Endothelial cell of umbilical vein (primary cell): ENCODE measurements at regions of chr6 and their contacts with region 1.

Region 1: GRCh38 chr6:29942275-29943052 is at the start of gene HLA-A:
- DNase-seq: peak; percentile 97
- H3K4me3 ChIP-seq: peak within 1 kb of the TSS; percentile 52 to 62 (median 55)
- H3K27ac ChIP-seq: peak within 1 kb of the TSS; percentile 67
- H3K4me1 ChIP-seq: no peaks in the 10 kb centered on the region
- H3K27me3 ChIP-seq: peaks cover 0 to 1% of the 10 kb centered on the region in 2 experiments
- CTCF ChIP-seq: no peak
- POLR2A ChIP-seq: peak; percentile 90
- total RNA-seq, gene HLA-A: 153 and 294 TPM in 2 replicates

Region 2: DNA sequence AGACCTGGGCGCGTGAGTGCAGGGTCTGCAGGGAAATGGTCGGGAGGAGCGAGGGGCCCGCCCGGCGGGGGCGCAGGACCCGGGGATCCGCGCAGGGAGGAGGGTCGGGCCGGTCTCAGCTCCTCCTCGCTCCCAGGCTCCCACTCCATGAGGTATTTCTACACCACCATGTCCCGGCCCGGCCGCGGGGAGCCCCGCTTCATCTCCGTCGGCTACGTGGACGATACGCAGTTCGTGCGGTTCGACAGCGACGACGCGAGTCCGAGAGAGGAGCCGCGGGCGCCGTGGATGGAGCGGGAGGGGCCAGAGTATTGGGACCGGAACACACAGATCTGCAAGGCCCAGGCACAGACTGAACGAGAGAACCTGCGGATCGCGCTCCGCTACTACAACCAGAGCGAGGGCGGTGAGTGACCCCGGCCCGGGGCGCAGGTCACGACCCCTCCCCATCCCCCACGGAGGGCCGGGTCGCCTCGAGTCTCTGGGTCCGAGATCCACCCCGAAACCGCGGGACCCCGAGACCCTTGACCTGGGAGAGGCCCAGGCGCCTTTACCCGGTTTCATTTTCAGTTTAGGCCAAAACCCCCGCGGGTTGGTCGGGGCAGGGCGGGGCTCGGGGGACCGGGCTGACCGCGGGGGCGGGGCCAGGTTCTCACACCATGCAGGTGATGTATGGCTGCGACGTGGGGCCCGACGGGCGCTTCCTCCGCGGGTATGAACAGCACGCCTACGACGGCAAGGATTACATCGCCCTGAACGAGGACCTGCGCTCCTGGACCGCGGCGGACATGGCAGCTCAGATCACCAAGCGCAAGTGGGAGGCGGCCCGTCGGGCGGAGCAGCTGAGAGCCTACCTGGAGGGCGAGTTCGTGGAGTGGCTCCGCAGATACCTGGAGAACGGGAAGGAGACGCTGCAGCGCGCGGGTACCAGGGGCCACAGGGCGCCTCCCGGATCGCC is 54.4 kb before region 1 on chr6:
- CTCF ChIA-PET with region 1: no interaction called
- POLR2A ChIA-PET with region 1: no interaction called
- dilution Hi-C with region 1: no loop called
- intact Hi-C with region 1: loop called (anchors 1 kb)
- DNase-seq: peak; percentile 10
- H3K4me3 ChIP-seq: peak overlapping the region; percentile 43 to 53 (median 46)
- H3K27ac ChIP-seq: no peak overlapping the region
- H3K4me1 ChIP-seq: peaks cover 5% of the 10 kb centered on the region
- H3K27me3 ChIP-seq: peaks cover 19 to 23% of the 10 kb centered on the region in 2 experiments
- CTCF ChIP-seq: no peak
- POLR2A ChIP-seq: no peak

Region 3: GRCh38 chr6:29909985-29910384 is 32.5 kb before region 1 on chr6:
- CTCF ChIA-PET with region 1: no interaction called
- POLR2A ChIA-PET with region 1: no interaction called
- dilution Hi-C with region 1: no loop called
- intact Hi-C with region 1: no loop called
- DNase-seq: no peak
- H3K4me3 ChIP-seq: no peak overlapping the region
- H3K27ac ChIP-seq: no peak overlapping the region
- H3K4me1 ChIP-seq: no peaks in the 10 kb centered on the region
- H3K27me3 ChIP-seq: peaks cover 10 to 31% of the 10 kb centered on the region in 2 experiments
- CTCF ChIP-seq: no peak
- POLR2A ChIP-seq: no peak

Region 4: DNA sequence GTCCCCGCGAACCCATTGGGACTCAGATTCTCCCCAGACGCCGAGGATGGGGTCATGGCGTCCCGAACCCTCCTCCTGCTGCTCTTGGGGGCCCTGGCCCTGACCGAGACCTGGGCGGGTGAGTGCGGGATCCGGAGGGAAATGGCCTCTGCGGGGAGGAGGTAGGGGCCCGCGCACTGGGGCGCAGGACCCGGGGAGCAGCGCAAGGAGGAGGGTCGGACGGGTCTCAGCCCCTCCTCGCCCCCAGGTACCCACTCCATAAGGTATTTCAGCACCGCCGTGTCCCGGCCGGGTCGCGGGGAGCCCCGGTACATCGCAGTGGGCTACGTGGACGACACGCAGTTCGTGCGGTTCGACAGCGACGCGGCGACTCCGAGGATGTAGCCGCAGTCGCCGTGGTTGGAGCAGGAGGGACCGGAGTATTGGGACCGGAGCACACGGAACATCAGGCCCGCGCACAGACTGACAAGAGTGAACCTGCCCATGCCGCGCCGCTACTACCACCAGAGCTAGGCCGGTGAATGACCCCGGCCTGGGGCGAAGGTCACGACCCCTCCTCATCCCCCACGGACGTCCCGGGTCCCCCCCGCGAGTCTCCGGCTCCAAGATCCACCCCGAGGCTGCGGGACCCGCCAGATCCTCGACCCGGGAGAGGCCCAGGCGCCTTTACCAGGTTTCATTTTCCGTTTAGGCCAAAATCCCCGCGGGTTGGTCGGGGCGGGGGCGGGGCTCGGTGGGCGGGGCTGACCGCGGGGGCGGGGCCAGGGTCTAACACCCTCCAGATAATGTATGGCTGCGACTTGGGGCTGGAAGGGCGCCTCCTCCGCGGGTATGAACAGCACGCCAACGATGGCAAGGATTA is 15.8 kb before region 1 on chr6:
- CTCF ChIA-PET with region 1: interaction called, 3 read pairs
- POLR2A ChIA-PET with region 1: no interaction called
- dilution Hi-C with region 1: no loop called
- intact Hi-C with region 1: loop called (anchors 1 kb)
- DNase-seq: peak; percentile 47
- H3K4me3 ChIP-seq: peak overlapping the region; percentile 67 to 74 (median 70)
- H3K27ac ChIP-seq: peak overlapping the region; percentile 63
- H3K4me1 ChIP-seq: peaks cover 9% of the 10 kb centered on the region
- H3K27me3 ChIP-seq: peaks cover 0 to 2% of the 10 kb centered on the region in 2 experiments
- CTCF ChIP-seq: no peak
- POLR2A ChIP-seq: no peak

Region 5: DNA sequence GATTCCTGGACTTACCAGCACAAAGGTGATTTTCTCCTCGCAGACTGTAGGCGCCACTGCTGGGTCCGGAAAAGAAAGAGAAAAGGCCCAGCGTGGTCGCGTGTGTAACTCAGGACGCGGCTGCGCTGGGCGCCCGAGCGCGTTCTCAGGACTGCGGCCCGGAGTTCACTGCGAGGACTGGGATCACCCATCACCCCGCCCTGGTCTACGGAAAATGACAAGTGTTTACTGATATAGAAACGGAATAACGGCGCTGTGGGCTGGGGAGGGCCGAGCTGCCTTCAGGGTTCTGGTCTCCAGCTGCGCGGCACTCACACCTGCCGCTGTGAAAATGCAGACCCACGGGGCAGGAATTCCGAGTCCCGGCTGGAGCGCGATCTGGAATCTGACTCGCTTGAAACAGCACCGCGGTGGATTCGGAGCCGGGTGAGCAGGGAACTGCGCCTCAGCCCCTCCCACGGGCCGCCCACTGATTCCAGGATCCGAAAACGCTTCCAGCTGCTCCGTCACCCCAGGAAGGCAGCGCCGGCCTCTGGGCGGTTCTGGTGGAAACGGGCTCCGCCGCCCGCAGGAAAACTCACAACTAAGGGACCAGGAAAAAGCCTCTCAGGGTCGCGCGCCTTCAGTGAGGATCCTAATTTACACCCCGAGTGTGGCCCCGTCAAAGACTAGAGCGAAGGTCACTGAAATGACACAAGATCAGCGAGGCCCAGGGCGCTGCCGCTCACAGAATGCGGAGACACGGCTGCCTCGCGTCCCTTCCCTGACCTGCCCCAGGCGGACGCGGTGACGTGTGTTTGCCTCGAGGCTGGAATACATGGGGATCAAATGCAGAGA is 34.3 kb after region 1 on chr6:
- CTCF ChIA-PET with region 1: no interaction called
- POLR2A ChIA-PET with region 1: no interaction called
- dilution Hi-C with region 1: no loop called
- intact Hi-C with region 1: loop called (anchors 2 kb)
- DNase-seq: peak; percentile 76
- H3K4me3 ChIP-seq: peak overlapping the region; percentile 49 to 56 (median 54)
- H3K27ac ChIP-seq: peak overlapping the region; percentile 35
- H3K4me1 ChIP-seq: peaks cover 12% of the 10 kb centered on the region
- H3K27me3 ChIP-seq: peaks cover 10 to 18% of the 10 kb centered on the region in 2 experiments
- CTCF ChIP-seq: peak in 1 of 2 donors; percentile 18
- POLR2A ChIP-seq: peak; percentile 17